ENCODE measurements at regions of chr6 and their contacts with region 1.

Region 1: GRCh38 chr6:89819336-89820130 is at the start of gene MDN1:
- H3K4me3 ChIP-seq: peak within 1 kb of the TSS; percentile 87
- H3K27ac ChIP-seq: peak within 1 kb of the TSS; percentile 57
- H3K4me1 ChIP-seq: 0 out of 2 replicates have a peak, but pooled peaks cover 4% of the 10 kb centered on the region
- CTCF ChIP-seq: no peak

Region 2: DNA sequence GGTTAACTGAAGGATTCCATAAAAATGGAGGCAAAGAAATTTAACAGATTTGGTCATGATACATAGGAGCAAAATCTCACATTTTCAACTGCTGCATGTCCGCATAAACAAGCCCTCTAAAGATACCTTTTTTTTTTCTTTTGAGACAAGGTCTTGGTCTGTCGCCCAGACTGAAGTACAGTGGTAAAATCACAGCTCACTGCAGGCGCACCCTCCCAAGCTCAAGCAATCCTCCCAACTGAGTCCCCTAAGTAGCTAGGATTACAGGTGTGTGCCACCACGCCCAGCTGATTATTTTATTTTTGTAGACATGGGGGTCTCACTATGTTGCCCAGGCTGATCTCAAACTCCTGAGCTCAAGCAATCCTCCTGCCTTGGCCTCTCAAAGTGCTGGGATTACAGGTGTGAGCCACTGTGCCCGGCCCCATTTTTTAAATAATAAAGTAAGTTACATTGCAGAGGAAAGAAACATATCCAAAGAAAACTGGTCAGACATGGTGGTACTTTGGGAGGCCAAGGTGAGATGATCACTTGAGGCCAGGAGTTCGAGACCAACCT is 13.6 kb before region 1 on chr6:
- CTCF ChIA-PET with region 1: no interaction called
- POLR2A ChIA-PET with region 1: interaction called, 10 read pairs
- H3K4me3 ChIP-seq: no peak overlapping the region
- H3K27ac ChIP-seq: no peak overlapping the region
- H3K4me1 ChIP-seq: no peaks in the 10 kb centered on the region; the same call in 1 of the 2 replicates
- CTCF ChIP-seq: no peak

Region 3: DNA sequence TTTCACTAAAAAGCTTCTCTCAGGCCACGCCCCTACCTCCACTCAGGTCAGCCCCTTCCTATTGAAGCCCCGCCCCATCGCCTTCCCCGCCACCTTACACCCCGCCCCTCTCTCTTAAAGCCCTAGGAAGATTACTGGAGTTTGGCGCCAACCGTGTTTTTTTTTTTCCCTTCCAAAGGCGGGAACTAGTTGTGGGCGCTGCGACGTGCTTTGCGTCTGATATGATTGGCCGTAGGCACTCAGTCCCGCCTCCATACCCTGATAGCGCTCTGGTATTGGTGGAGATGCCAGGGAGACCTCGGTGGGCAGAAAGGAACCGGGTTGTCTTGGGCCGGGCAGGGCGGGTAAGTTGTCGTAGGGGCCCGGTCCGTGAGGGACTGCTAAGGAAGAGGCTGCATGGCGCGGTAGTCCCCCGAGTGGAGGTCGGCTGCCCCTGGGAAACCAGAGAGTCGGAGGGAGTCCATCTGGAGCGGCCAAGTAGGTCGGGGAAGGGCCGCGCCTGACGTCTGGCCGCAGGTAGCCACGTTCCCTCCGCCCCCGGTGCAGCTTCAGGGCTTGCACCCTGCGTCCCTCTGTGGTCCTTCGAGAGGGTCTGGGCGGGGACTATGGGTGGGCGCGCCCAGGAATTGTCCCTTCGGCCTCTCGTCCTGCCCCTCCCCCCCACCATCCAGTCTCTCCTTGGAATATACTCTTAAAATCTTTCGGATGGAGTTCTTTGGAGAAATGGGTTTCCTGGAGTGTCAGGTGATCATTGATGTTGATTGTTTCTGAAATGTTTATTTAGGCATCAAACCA is 10.3 kb after region 1 on chr6 and contains the start of gene CASP8AP2:
- CTCF ChIA-PET with region 1: interaction called, 5 read pairs
- POLR2A ChIA-PET with region 1: interaction called, 55 read pairs
- H3K4me3 ChIP-seq: peak within 1 kb of the TSS; percentile 95
- H3K27ac ChIP-seq: peak within 1 kb of the TSS; percentile 91
- H3K4me1 ChIP-seq: no peaks in the 10 kb centered on the region
- CTCF ChIP-seq: no peak

Region 4: GRCh38 chr6:89840538-89840937 is 21.0 kb after region 1 on chr6:
- CTCF ChIA-PET with region 1: interaction called, 4 read pairs
- POLR2A ChIA-PET with region 1: interaction called, 12 read pairs
- H3K4me3 ChIP-seq: no peak overlapping the region
- H3K27ac ChIP-seq: no peak overlapping the region
- H3K4me1 ChIP-seq: peaks cover 18% of the 10 kb centered on the region; the same call in 1 of the 2 replicates
- CTCF ChIP-seq: no peak

Measured in HEK293 (cell line).